Activated B cell treated with CpG ODN at 0.5 μM for 24 hours (primary cell): ENCODE measurements at regions of chr4 and their contacts with region 1.

Region 1: DNA sequence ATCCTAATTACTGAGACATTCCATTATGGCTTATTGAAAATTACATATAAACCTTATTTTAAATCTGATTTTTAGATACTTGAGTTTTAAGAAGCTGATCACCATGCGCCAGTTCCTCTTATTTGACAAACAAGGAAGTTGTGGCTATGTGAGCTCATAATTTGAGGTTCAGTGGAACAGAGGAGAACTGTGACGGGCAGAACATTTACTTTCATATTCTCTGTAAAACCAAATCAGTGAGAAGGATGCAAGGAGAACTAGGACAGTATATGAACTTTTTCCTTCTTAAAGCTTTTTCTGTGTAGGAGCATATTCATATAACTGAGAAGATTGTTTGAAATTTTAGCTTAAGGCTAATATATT is 25.3 kb downstream of the STIM2 start:
- DNase-seq: no peak
- ATAC-seq: peak; percentile 67
- H3K4me3 Mint-ChIP-seq: peak overlapping the region; percentile 73
- H3K27ac Mint-ChIP-seq: peak overlapping the region; percentile 95
- H3K4me1 Mint-ChIP-seq: peaks cover 90% of the 10 kb centered on the region
- H3K27me3 Mint-ChIP-seq: no peaks in the 10 kb centered on the region
- CTCF ChIP-seq: no peak

Region 2: DNA sequence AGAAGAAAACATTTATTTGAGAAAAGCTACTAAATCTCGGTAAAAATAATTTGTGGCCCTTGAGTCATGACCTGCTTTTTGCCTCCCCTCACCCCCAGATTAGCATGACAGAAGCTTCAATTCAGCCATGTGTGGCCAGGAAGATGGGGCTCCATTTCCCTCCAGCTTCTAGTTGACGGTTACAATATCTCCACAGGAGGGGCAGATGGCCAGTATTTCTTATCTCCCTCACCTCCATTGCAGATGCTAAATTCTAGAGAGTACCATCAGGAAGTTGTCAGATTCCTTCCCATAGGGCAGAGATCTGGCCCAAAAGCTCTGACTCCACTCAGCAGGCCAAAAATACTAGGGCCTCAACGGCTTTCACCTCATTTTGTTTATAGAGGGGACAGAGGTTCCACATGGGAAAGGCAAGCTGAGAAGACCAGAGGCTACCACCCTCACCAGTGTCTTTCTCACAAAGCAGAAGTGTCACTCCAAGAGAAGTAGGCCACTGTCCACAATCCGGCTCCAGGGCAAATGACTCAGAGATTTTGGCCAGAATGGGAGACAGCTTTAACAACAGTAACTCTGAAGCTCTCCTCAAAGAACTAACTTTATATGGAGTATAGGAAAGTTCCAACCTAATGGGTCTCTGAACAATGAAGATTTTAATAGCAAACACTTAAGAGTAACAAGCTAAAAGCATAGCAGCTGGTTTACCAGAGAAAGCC is 193.7 kb before region 1 on chr4:
- CTCF ChIA-PET with region 1: no interaction called
- POLR2A ChIA-PET with region 1: no interaction called
- intact Hi-C with region 1: no loop called
- DNase-seq: no peak
- ATAC-seq: no peak
- H3K4me3 Mint-ChIP-seq: no peak overlapping the region
- H3K27ac Mint-ChIP-seq: no peak overlapping the region
- H3K4me1 Mint-ChIP-seq: no peaks in the 10 kb centered on the region
- H3K27me3 Mint-ChIP-seq: no peaks in the 10 kb centered on the region
- CTCF ChIP-seq: no peak

Region 3: DNA sequence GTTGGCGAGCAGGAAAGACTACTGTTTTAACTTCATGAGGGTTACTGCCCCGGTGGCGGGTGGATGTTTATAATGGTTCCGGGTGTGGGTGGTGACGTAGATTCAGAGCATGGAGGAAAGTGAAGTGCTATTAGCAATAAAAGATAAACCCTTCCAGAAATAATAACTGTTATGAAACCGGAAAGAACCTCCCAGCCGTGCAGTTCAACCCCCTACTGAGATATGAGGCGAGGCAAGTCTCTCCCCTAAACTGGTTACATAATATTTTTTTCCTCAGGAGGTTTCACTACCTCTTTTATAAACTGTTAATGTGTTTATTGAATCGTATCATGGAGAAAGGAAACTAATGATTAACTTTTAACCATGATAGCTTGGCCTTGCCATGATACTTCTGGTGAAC is 59.2 kb before region 1 on chr4:
- CTCF ChIA-PET with region 1: interaction called, 6 read pairs
- POLR2A ChIA-PET with region 1: interaction called, 9 read pairs
- intact Hi-C with region 1: loop called (anchors 1 kb)
- DNase-seq: peak; percentile 47
- ATAC-seq: peak; percentile 84
- H3K4me3 Mint-ChIP-seq: peak overlapping the region; percentile 59
- H3K27ac Mint-ChIP-seq: peak overlapping the region; percentile 88
- H3K4me1 Mint-ChIP-seq: peaks cover 92% of the 10 kb centered on the region
- H3K27me3 Mint-ChIP-seq: peaks cover 9% of the 10 kb centered on the region
- CTCF ChIP-seq: no peak

Region 4: GRCh38 chr4:26896636-26897035 is 10.7 kb after region 1 on chr4:
- CTCF ChIA-PET with region 1: no interaction called
- POLR2A ChIA-PET with region 1: interaction called, 5 read pairs
- intact Hi-C with region 1: loop called (anchors 1 kb)
- DNase-seq: no peak
- ATAC-seq: no peak
- H3K4me3 Mint-ChIP-seq: no peak overlapping the region
- H3K27ac Mint-ChIP-seq: no peak overlapping the region
- H3K4me1 Mint-ChIP-seq: peaks cover 77% of the 10 kb centered on the region
- H3K27me3 Mint-ChIP-seq: no peaks in the 10 kb centered on the region
- CTCF ChIP-seq: no peak

Region 5: DNA sequence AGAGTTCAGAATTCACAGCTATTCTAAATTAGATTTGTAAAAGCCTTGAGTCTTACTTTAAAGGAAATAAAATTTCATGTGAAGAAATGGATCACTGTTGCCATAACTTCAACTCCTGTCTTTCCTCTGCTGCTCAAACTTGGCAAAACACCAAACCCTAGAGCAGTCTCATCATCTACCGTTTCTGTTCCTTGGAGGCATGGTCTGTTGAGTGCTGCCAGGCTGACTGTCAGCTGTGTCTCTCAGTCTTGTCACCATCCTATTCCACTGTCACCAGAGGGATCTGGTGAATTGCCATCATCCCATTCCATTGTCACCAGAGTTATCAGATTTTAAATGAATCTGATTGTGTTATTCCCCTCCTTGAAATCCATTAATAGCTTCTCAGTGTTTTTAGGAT is 30.3 kb after region 1 on chr4:
- CTCF ChIA-PET with region 1: no interaction called
- POLR2A ChIA-PET with region 1: interaction called, 8 read pairs
- intact Hi-C with region 1: loop called (anchors 5 kb)
- DNase-seq: no peak
- ATAC-seq: peak; percentile 49
- H3K4me3 Mint-ChIP-seq: no peak overlapping the region
- H3K27ac Mint-ChIP-seq: peak overlapping the region; percentile 31
- H3K4me1 Mint-ChIP-seq: peaks cover 55% of the 10 kb centered on the region
- H3K27me3 Mint-ChIP-seq: no peaks in the 10 kb centered on the region
- CTCF ChIP-seq: no peak

Region 6: GRCh38 chr4:26992657-26993361 is 106.9 kb after region 1 on chr4:
- CTCF ChIA-PET with region 1: no interaction called
- POLR2A ChIA-PET with region 1: interaction called, 28 read pairs
- intact Hi-C with region 1: loop called (anchors 1 kb)
- DNase-seq: peak; percentile 26
- ATAC-seq: peak; percentile 80
- H3K4me3 Mint-ChIP-seq: no peak overlapping the region
- H3K27ac Mint-ChIP-seq: no peak overlapping the region
- H3K4me1 Mint-ChIP-seq: peaks cover 17% of the 10 kb centered on the region
- H3K27me3 Mint-ChIP-seq: no peaks in the 10 kb centered on the region
- CTCF ChIP-seq: no peak